Mucosa of descending colon (tissue), 3 donors: ENCODE measurements at regions of chr16 and their contacts with region 1.

Region 1: DNA sequence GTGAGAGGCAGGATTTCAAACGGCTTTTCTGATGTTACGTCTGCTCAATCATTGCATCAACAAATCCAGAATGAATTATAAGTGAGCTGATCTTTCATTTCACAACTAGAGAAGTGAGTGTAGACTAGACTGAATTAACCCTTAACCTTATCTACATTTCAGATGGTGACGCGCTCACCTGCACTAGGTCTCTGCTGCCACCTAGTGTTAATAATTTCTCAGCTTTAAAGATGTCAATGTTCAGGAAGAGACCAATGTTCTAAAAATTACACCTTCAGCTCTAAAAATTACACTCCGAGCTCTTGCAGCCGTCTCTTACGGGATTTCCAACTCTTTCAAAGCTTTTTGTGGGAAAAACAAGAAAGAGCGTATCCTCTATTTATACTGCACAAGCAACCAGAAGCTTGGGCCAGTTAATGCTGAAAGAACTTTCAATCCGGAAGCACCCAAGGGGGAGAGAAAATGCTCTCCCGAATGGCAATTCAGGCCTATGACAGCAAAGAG is 88.2 kb upstream of the FA2H start:
- DNase-seq: peak in 1 of 3 donors; percentile 49
- ATAC-seq: peak; percentile 70
- H3K4me3 ChIP-seq: no peak overlapping the region
- H3K4me1 ChIP-seq: no peaks in the 10 kb centered on the region
- CTCF ChIP-seq: peak; percentile 36

Region 2: GRCh38 chr16:74718741-74719610 is 143.8 kb before region 1 on chr16:
- intact Hi-C with region 1: loop called (anchors 5 to 10 kb)
- DNase-seq: no peak
- ATAC-seq: no peak
- H3K4me3 ChIP-seq: no peak overlapping the region
- H3K4me1 ChIP-seq: no peaks in the 10 kb centered on the region
- CTCF ChIP-seq: no peak

Region 3: DNA sequence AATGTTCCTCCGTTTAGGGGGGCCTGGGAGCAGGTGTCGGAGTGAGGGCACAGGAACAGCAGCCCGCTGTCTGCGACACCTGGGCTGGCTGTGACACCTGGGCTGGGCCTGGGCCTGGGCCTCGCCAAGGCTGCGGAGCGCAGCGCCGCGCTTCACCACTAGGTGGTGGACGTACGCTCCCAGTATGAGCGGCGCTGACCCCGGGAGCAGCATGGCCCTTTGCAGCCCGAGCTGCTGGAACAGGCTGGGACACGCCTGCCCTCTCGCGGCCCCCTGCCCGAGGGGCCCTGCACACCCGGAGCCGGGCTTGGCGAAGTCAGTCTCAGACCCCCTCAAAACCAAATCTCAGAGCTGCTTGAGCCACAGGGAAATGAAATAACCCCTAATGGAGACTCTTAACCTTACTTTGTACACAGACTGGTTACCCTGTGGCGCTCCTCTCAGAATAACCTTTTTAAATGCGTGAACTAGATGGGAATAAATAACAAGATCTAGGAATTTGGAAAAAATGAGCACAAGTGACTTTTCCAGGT is 49.6 kb before region 1 on chr16:
- intact Hi-C with region 1: loop called (anchors 5 kb)
- DNase-seq: peak; percentile 81 to 93 (median 91)
- ATAC-seq: peak; percentile 100
- H3K4me3 ChIP-seq: no peak overlapping the region
- H3K4me1 ChIP-seq: no peaks in the 10 kb centered on the region
- CTCF ChIP-seq: peak; percentile 89